SK-N-SH (cell line): ENCODE measurements at regions of chr11 and their contacts with region 1.

Region 1: GRCh38 chr11:128599729-128600128 is 12.4 kb upstream of the ETS1 start:
- DNase-seq: no peak
- H3K4me3 ChIP-seq: no peak overlapping the region
- H3K27ac ChIP-seq: no peak overlapping the region
- H3K4me1 ChIP-seq: no peaks in the 10 kb centered on the region
- H3K27me3 ChIP-seq: no peaks in the 10 kb centered on the region
- CTCF ChIP-seq: no peak
- EP300 ChIP-seq: no peak
- RAD21 ChIP-seq: no peak

Region 2: DNA sequence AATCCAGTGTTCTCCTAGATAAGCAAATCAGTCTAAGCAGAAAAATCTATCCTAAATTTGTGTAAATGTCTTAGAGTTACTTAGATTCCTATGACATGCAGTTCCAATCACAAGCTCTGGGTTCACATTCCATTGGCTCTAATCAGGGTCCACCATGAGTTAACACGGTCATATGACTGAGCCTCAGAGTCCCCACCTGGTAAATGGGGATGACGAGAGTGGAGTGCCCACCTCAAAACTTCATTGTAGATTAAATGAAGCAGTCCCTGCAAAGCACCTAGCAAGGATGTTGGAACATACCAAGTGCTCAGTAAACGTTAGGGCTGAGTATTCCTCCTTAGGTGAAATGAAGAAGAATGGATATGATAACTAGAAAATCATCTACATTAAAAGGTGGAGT is 15.5 kb before region 1 on chr11:
- CTCF ChIA-PET with region 1: no interaction called
- POLR2A ChIA-PET with region 1: no interaction called
- DNase-seq: no peak
- H3K4me3 ChIP-seq: no peak overlapping the region
- H3K27ac ChIP-seq: no peak overlapping the region
- H3K4me1 ChIP-seq: no peaks in the 10 kb centered on the region; a peak in 1 of 4 replicates
- H3K27me3 ChIP-seq: no peaks in the 10 kb centered on the region; the same call in 1 of the 2 replicates
- CTCF ChIP-seq: no peak
- EP300 ChIP-seq: no peak
- RAD21 ChIP-seq: no peak

Region 3: DNA sequence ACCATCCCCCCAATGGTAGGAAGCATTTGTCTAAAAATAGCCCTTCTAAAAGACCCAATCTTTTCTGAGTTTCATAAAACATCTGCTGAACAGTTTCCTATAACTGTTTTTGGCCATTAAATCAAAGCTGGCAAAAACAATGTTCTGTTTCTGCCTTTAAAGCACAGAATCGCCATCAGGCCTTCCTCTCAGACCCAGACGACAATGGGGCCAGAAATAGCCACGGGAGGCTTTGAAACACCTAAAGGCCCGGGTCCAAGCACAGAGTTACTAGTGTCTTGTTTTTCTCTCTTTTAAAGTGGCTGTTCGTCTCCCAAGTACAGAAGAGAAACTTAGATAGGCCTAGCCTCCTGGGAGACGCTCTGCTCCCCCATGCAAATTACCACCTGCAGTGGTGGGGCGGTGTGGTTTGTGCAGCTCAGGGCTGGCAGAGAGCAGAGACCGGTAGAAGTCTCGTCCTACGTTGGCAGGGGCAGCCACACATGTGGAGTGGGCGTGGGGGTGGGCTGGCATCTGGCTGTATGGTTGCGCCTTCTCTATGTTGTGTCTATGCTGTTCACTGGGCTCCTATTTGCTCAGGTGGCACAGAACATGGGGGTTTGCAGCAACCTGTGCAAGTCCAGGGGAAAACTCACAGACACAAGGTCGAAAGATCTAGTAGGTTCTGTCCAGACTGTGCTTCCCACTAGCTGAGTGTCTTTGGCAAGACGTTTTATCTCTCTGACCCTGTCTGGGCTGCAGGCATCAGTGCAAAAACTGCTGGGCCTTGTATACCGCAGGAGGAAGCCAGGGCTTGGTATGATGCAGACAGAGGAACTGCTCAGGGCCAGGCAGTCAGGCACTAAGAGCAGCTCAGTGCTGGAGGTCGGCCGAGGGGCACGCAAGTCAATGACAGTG is 11.2 kb after region 1 on chr11:
- CTCF ChIA-PET with region 1: interaction called, 15 read pairs
- POLR2A ChIA-PET with region 1: no interaction called
- DNase-seq: no peak
- H3K4me3 ChIP-seq: no peak overlapping the region
- H3K27ac ChIP-seq: no peak overlapping the region
- H3K4me1 ChIP-seq: peaks cover 0 to 25% of the 10 kb centered on the region in 2 experiments; a peak in 2 of 4 replicates
- H3K27me3 ChIP-seq: no peaks in the 10 kb centered on the region; the same call in 1 of the 2 replicates
- CTCF ChIP-seq: no peak
- EP300 ChIP-seq: no peak
- RAD21 ChIP-seq: no peak